ENCODE measurements at regions of chr10 and their contacts with region 1.

Region 1: GRCh38 chr10:8473205-8473604 is 418.7 kb downstream of the GATA3 start:
- DNase-seq: no peak
- H3K4me3 ChIP-seq: no peak overlapping the region
- H3K27ac ChIP-seq: no peak overlapping the region
- H3K4me1 ChIP-seq: no peaks in the 10 kb centered on the region
- H3K27me3 ChIP-seq: no peaks in the 10 kb centered on the region
- CTCF ChIP-seq: no peak
- EP300 ChIP-seq: no peak
- POLR2A ChIP-seq: no peak

Region 2: DNA sequence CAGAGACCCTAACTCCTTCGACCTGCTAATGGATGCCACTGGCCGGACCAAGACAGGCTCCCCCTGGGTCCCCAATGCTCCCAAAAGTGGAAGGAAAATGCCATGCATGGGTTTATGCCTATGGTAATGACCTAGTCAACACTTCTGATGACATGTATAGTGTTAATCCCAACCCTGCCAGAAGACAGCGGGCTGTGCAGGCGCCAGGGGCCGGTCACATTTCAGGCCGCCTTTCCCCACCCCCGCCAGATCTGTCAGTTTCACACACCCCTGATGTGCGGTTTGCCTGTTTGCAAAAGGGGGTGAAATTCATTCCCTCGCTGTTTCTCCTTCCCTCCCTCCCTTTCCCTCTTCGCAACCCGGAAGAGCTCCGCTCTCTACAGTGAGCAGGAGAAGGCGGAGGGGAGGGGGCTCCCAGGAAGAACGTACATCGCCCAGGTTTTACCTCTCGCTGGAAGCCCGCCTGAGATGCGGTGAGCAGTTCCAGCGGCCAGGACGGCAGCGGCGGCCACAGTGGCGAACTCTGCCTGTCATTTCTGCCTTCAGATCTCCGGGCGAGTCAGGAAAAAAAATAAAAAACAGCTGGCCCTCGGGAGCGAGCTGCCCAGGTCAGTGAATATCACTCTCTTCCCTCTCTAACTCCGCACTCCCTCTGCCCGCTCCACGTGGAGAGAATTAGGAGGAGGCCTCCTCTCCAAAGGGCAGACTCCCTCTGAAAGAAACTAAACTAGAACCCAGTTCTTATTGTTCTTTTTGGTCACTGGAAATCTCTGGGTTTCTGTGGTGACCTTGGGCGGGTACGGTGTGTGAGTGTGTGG is 428.1 kb before region 1 on chr10:
- in situ Hi-C with region 1: loop called in 1 of 4 experiments (anchors 25 kb)
- intact Hi-C with region 1: no loop called
- DNase-seq: no peak
- H3K4me3 ChIP-seq: peak overlapping the region in 2 of 4 donors; percentile 2 to 32
- H3K27ac ChIP-seq: no peak overlapping the region
- H3K4me1 ChIP-seq: peaks cover 2 to 41% (median 23%) of the 10 kb centered on the region in 4 donors
- H3K27me3 ChIP-seq: peaks cover 100% of the 10 kb centered on the region
- CTCF ChIP-seq: no peak
- EP300 ChIP-seq: no peak
- POLR2A ChIP-seq: no peak